ENCODE measurements at regions of chr10 and their contacts with region 1.

Region 1: DNA sequence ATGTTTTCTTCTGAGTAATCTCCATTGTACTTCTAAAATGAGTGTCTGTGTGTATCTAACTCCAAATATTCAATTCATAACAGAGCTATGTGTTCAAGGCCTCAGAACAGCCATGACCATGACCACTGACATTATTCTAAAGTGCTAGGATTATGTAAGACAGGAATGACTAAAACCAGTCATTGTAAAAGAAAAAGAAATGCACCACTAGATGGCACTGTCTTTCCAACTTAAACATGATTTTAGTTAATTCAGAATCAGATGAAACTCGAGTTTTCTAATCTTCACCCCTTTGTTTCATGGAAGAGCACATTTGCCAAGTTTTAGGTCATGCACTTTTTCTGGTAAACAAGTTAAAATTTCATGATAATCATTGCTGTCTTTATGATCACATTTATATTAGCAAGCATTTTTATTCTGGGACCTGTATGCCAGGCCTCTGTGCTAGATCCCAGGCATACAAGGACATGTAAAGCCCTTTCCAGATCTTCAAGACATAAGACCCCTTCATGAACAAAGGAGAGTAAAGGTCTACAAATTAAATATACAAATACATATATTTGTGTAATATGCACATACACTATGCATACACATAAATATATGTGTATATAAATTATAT is 26.1 kb upstream of the RSU1 start:
- DNase-seq: no peak
- H3K4me3 Mint-ChIP-seq: no peak overlapping the region
- H3K27ac Mint-ChIP-seq: no peak overlapping the region
- H3K4me1 Mint-ChIP-seq: peaks cover 4% of the 10 kb centered on the region
- H3K27me3 Mint-ChIP-seq: no peaks in the 10 kb centered on the region

Region 2: GRCh38 chr10:16724509-16724908 is 118.9 kb before region 1 on chr10:
- CTCF ChIA-PET with region 1: no interaction called
- POLR2A ChIA-PET with region 1: no interaction called
- intact Hi-C with region 1: no loop called
- DNase-seq: no peak
- H3K4me3 Mint-ChIP-seq: no peak overlapping the region
- H3K27ac Mint-ChIP-seq: no peak overlapping the region
- H3K4me1 Mint-ChIP-seq: peaks cover 5% of the 10 kb centered on the region
- H3K27me3 Mint-ChIP-seq: no peaks in the 10 kb centered on the region

Region 3: DNA sequence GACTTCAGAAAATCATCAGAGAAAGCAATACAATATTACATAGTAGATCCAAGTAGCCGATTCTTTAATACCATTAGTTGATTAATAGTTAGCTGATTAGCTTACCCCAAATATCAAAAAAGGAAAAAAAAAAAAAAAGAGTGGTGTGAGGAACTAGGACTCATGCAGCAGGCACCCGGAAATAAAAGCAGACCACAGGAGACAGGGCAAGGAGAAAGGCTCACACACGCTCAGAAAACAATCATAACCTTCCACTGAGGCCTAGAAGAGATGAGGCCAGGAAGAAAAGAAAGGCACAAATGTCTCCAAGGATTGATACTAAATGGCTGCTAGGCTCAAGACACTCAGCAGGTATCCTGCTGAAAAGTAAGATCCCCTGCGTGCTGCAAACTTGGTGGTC is 332.2 kb after region 1 on chr10:
- CTCF ChIA-PET with region 1: no interaction called
- POLR2A ChIA-PET with region 1: no interaction called
- intact Hi-C with region 1: loop called (anchors 5 kb)
- DNase-seq: no peak
- H3K4me3 Mint-ChIP-seq: peak overlapping the region; percentile 13
- H3K27ac Mint-ChIP-seq: peak overlapping the region; percentile 28
- H3K4me1 Mint-ChIP-seq: peaks cover 6% of the 10 kb centered on the region
- H3K27me3 Mint-ChIP-seq: no peaks in the 10 kb centered on the region

Measured in activated CD4-positive, alpha-beta memory T cell treated with anti-CD3 and anti-CD28 coated beads for 36 hours (primary cell).